Psoas muscle (tissue), 8 donors: ENCODE measurements at regions of chr17 and their contacts with region 1.

Region 1: DNA sequence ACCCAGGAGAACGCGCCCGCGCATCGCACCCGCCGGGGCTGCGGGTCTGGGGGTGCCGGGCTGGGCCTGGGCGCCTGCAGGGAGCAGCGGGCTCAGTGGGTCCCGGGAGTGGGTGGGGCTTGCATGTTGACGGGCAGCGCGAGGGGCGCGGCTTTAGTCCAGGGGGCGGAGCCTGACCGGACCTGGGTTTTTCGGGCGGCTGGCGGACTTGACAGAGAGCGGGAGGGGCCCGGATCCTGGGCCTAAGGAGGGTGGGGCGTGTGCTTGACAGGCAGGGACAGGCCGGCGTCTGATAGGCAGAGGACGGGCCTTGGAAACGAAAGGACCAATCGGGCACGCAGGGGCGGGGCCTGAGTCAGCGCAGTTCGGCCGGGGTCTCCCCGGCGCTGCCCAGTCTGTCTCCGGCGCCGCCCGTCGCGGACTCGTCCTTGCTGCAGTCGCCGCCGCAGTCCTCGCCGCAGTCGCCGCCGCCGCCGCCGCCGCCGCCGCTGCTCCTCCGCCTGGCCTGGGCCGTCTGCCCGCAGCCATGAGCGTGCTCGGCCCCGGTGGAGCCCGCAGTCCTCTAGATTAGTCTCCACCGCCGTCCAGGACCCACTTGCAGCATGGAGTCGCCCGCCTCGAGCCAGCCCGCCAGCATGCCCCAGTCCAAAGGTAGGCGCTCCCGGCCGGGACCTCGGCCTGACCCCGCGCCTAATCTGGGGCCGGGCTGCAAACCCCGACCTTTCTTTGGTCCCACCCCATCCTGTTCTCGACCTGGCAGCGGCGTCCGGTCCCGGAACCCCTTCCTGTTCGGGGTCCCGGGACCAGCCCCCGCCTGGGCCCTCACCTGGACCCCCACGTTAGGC is at the start of gene MAP2K3:
- DNase-seq: peak; percentile 99
- ATAC-seq: peak; percentile 64 to 70 (median 66)
- H3K4me3 ChIP-seq: peak within 1 kb of the TSS; percentile 89
- H3K27ac ChIP-seq: peak within 1 kb of the TSS; percentile 99
- H3K4me1 ChIP-seq: peaks cover 49% of the 10 kb centered on the region
- H3K27me3 ChIP-seq: no peaks in the 10 kb centered on the region
- CTCF ChIP-seq: no peak
- total RNA-seq, gene MAP2K3: 64.4 to 126 (median 107) TPM

Region 2: GRCh38 chr17:21043286-21044232 is 241.0 kb before region 1 on chr17:
- intact Hi-C with region 1: loop called in 1 of 2 experiments (anchors 2 kb)
- DNase-seq: peak; percentile 99 to 100
- ATAC-seq: peak; percentile 89 to 94 (median 90)
- H3K4me3 ChIP-seq: peak overlapping the region; percentile 80
- H3K27ac ChIP-seq: peak overlapping the region; percentile 99
- H3K4me1 ChIP-seq: peaks cover 23% of the 10 kb centered on the region
- H3K27me3 ChIP-seq: no peaks in the 10 kb centered on the region
- CTCF ChIP-seq: peak; percentile 92

Region 3: GRCh38 chr17:21126645-21127510 is 157.7 kb before region 1 on chr17 and contains the start of gene DHRS7B:
- intact Hi-C with region 1: loop called (anchors 5 kb)
- DNase-seq: peak; percentile 95 to 98
- ATAC-seq: peak; percentile 93 to 96 (median 95)
- H3K4me3 ChIP-seq: peak within 1 kb of the TSS; percentile 93
- H3K27ac ChIP-seq: peak within 1 kb of the TSS; percentile 98
- H3K4me1 ChIP-seq: peaks cover 37% of the 10 kb centered on the region
- H3K27me3 ChIP-seq: no peaks in the 10 kb centered on the region
- CTCF ChIP-seq: no peak
- total RNA-seq, gene DHRS7B: 15.7 to 50.1 (median 37.7) TPM

Region 4: GRCh38 chr17:21146362-21147015 is 138.1 kb before region 1 on chr17:
- intact Hi-C with region 1: no loop called
- DNase-seq: no peak
- ATAC-seq: peak in 2 of 4 donors; percentile 67 to 72
- H3K4me3 ChIP-seq: no peak overlapping the region
- H3K27ac ChIP-seq: no peak overlapping the region
- H3K4me1 ChIP-seq: peaks cover 13% of the 10 kb centered on the region
- H3K27me3 ChIP-seq: no peaks in the 10 kb centered on the region
- CTCF ChIP-seq: no peak

Region 5: GRCh38 chr17:21161498-21162393 is 122.8 kb before region 1 on chr17:
- intact Hi-C with region 1: loop called (anchors 10 kb)
- DNase-seq: no peak
- ATAC-seq: peak; percentile 78 to 81 (median 79)
- H3K4me3 ChIP-seq: peak overlapping the region; percentile 61
- H3K27ac ChIP-seq: peak overlapping the region; percentile 96
- H3K4me1 ChIP-seq: peaks cover 50% of the 10 kb centered on the region
- H3K27me3 ChIP-seq: no peaks in the 10 kb centered on the region
- CTCF ChIP-seq: no peak

Region 6: GRCh38 chr17:21214015-21214776 is 70.3 kb before region 1 on chr17 and contains the start of gene TMEM11:
- intact Hi-C with region 1: loop called (anchors 5 kb)
- DNase-seq: peak; percentile 97 to 99
- ATAC-seq: peak; percentile 84 to 92 (median 86)
- H3K4me3 ChIP-seq: peak within 1 kb of the TSS; percentile 97
- H3K27ac ChIP-seq: peak within 1 kb of the TSS; percentile 99
- H3K4me1 ChIP-seq: peaks cover 67% of the 10 kb centered on the region
- H3K27me3 ChIP-seq: no peaks in the 10 kb centered on the region
- CTCF ChIP-seq: no peak
- total RNA-seq, gene TMEM11: 52.9 to 78.4 (median 58.6) TPM

Region 7: GRCh38 chr17:21252796-21253645 is 31.5 kb before region 1 on chr17 and contains the start of gene NATD1:
- intact Hi-C with region 1: loop called in 1 of 2 experiments (anchors 5 kb)
- DNase-seq: peak; percentile 88 to 94
- ATAC-seq: peak; percentile 56 to 82 (median 69)
- H3K4me3 ChIP-seq: peak within 1 kb of the TSS; percentile 71
- H3K27ac ChIP-seq: peak within 1 kb of the TSS; percentile 94
- H3K4me1 ChIP-seq: peaks cover 47% of the 10 kb centered on the region
- H3K27me3 ChIP-seq: no peaks in the 10 kb centered on the region
- CTCF ChIP-seq: no peak
- total RNA-seq, gene NATD1: 21.6 to 48.0 (median 24.5) TPM

Region 8: DNA sequence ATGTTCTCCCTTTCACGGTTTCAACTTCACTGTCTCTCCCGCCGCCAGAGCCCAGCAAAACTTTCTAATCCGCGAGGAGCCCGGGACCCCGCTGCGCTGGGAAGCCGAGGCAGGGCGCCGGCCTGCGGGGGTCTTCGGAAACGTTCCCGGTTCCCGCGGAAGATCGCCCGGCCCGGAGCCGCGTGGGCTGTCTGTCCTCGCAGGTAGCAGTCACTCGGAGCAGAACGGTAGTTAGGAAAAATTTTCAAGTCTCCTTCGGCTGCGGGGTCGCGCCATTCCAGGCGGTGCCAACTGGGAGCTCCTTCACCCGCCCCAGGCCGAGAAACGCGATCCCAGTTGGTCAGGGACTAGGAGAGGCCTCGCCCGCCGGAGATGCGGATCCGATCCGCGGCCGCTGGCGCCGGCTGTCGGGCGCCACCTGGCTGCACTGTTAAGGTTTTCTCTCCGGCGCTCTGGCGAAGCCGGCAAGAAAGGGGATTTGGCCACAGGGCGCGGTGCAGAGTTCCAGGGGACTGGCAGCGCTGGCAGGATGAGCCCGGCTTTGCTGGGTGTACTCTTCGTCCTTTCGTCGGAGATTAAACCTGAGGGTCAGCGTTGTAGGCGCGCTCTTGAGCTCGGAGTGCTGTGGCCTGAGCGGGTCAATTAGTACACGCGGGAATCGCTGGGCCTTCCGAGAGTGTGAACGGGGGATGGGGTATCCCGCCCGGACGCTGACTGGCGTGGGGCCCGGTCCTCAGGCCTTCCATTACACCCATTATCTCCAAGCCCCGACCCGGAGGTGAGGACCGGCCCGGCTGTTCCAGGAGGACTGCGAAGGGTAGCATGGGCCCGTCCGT is 227.0 kb after region 1 on chr17:
- intact Hi-C with region 1: loop called (anchors 2 to 10 kb)
- DNase-seq: peak; percentile 85 to 93
- ATAC-seq: peak; percentile 92 to 97 (median 94)
- H3K4me3 ChIP-seq: peak overlapping the region; percentile 81
- H3K27ac ChIP-seq: peak overlapping the region; percentile 66
- H3K4me1 ChIP-seq: peaks cover 3% of the 10 kb centered on the region
- H3K27me3 ChIP-seq: no peaks in the 10 kb centered on the region
- CTCF ChIP-seq: peak; percentile 84